HEK293 (cell line): ENCODE measurements at regions of chr5 and their contacts with region 1.

Region 1: DNA sequence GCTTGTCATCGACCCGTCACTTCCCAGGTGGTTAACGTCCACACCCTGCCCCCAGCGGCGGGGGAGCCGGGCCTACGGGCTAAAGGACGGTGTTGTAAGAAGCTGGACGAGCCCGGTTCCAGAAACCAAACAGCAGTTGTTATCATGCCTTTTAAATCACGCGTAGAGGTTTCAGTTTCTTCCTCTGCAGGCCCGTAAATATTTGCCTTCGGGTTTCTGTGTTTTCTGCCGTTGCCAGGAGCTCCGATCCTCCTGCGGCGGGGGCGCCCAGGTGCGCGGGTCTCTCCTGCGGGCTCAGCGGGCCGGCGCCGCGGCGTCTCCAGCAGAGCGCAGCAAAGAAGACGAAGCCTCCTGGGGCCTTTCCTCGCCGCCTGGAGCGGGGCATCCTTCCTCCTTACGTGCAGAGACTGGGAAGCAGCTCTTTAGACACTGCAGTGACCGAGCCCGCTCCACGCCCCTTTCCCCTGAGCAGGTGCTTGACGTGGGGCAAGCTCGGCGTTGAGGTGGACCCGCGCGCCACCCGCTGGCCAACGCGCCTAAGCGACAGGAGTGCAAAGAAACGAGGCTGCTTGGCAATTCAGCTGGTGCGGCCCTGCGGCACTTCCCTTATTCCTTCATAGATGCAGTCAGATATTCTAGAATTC is 21.8 kb upstream of the TTC1 start:
- H3K4me3 ChIP-seq: peak overlapping the region; percentile 38
- H3K27ac ChIP-seq: no peak overlapping the region
- H3K4me1 ChIP-seq: peaks cover 3% of the 10 kb centered on the region; the same call in 1 of the 2 replicates
- CTCF ChIP-seq: peak; percentile 87

Region 2: DNA sequence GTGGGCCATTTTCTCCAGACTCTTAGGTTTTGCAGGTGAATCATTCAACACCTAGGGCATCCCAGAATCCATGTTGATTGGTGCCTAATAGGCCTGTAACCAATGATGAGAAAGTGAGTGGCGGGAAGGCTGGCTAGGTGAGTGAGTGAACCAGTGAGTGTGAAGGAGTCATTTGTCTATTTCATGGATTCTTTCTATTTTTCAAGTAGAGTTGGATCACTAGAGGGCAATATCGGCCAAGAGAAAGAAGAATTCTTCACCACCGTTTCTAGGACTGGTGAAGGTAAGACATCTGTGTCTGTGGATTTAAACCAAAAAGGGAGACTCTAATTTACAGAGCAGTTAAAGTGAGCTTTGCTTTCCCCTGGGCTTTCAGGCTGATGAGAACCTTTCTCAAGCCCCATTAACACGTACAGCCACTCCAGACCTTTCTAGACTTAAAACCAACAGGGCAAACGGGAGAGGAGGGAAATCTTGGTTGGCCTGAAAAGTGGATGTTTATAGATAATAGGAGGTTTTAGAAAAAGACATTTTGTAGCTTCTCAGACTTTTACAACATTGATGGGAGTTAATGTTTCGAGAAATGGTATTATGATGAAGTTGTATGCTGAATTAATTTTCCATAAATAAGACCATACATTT is 542.6 kb before region 1 on chr5:
- CTCF ChIA-PET with region 1: interaction called, 68 read pairs
- POLR2A ChIA-PET with region 1: interaction called, 8 read pairs
- H3K4me3 ChIP-seq: no peak overlapping the region
- H3K27ac ChIP-seq: no peak overlapping the region
- H3K4me1 ChIP-seq: peaks cover 11% of the 10 kb centered on the region
- CTCF ChIP-seq: peak; percentile 66; the same call in 1 of the 2 replicates

Region 3: DNA sequence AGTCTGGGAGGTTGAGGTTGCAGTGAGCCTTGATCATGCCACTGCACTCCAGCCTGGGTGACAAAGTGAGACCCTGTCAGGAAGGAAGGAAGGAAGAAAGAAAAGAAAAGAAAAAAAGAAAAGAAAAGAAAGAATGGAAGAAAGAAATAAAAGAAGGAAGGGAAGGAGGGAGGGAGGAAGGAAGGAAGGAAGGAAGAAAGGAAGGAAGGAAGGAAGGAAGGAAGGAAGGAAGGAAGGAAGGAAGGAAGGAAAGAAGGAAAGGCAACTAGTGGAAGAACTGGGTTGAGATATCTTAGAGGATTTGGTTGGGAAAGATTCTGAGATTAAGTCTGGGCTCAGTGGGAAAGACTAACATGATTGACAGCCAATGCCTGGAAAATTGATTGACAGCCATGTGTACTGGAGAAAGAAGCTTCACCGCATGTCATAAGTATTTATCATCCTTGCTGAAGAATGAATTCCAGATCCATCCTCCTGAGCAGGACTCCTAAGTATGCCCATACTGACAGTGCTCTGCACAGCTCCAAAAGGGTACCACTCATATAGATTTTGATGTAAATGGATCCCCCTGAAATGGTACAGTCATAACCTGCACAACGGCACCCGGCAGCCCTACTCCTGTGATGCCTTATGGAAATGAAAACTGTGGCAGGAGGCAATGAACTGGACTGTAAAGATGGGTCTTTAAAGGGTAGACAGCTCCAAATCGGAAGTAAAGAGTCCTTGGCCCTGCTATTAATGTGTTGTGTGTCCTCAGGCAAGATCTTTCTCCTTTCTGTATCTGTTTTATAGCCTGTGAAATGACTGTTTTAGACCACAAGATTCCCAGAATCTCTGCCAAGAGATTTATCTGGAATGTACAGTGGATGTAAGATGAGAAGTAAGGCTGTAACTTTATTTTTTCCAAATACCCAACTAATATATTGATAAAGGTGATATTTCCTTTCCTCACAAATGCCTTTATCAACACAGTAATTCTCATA is 87.8 kb before region 1 on chr5:
- CTCF ChIA-PET with region 1: no interaction called
- POLR2A ChIA-PET with region 1: no interaction called
- H3K4me3 ChIP-seq: no peak overlapping the region
- H3K27ac ChIP-seq: no peak overlapping the region
- H3K4me1 ChIP-seq: peaks cover 13% of the 10 kb centered on the region
- CTCF ChIP-seq: no peak

Region 4: DNA sequence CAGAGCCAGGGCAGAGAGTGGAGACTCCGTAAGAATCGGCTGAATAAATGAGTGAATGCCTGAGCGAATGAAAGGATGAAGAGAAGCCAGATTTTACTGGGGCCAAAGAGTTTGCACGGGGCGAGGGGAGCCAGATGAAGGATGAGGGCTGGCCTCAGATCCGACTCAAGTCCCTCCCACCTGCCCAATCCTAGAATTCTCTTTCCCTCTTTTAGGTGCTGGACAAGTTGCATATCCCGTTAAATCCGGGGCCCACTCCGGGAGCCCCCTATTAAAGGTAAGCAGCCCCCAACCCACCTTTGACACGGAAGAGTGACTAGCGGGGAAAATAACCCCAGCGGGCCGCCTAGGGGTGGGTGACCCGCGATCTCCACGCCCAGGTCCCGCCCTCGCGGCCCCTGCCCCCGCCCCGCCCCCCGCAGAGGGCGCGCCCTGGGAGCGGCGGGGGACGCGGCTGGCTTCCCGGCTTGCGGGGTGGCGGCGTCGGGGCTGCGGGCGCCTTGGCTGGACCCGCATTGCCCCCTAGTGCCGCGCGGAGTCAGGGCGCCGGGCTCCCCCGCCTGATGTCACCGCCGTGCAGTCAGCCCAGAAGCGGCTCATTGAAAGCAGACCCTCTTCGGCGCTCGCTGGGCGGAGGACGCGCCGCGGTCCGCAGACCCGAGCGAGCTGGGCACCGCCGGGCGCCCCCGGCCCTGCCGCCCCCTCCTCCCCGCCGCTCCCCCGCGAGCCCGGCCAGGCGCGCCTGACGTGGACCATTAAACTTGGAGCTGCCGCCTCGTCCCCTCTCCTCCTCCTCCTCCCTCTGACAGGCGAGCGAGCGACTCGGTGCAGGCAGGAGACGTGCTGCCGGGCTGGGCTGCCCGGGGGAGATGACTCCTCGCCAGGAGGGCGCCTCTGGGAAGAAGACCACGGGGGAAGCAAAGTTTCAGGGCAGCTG is 71.0 kb before region 1 on chr5 and contains the start of gene ADRA1B:
- CTCF ChIA-PET with region 1: interaction called, 43 read pairs
- POLR2A ChIA-PET with region 1: interaction called, 4 read pairs
- H3K4me3 ChIP-seq: peak within 1 kb of the TSS; percentile 41
- H3K27ac ChIP-seq: peak within 1 kb of the TSS; percentile 7; the same call in 1 of the 2 replicates
- H3K4me1 ChIP-seq: no peaks in the 10 kb centered on the region; the same call in 1 of the 2 replicates
- CTCF ChIP-seq: peak; percentile 31; the same call in 1 of the 2 replicates

Region 5: DNA sequence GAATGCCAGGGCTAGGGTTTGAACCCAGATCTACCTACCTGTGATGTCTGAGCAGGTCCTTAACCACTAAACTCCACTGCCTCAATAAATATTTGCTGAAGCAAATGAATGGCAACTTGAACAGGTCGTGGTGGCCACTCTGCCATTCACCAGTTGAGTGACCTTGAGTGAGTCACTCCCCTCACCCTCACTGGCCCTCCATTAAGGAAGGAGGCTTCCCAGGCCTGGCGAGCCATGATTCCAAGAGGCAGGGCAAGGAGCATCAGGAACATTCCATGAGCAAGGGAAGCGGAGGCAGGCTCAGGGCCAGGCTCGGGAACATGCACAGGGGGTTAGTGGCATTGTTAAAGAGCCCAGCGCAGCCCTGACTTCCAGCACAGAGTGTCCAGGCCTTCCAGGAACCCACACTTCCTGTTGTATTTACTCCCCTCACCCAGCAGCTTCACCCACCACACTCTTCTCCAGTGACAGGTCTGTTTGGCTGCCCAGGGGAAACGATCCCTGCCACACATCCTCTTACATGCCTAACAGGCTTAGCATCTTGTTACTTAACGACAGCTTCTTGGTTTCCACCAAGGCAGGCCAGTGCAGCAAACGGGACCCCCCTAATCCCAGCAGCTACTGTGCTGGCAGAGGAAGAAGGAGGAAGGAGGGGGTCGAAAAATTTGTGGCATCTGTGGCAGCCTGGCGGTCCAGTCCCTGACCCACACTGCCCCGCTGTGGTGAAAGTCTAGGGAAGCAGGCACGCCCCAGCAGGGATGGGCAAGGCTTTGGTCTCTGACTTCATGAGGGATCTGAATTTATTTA is 21.9 kb before region 1 on chr5:
- CTCF ChIA-PET with region 1: interaction called, 12 read pairs
- POLR2A ChIA-PET with region 1: no interaction called
- H3K4me3 ChIP-seq: no peak overlapping the region
- H3K27ac ChIP-seq: no peak overlapping the region
- H3K4me1 ChIP-seq: no peaks in the 10 kb centered on the region; the same call in 1 of the 2 replicates
- CTCF ChIP-seq: peak; percentile 49